CD14-positive monocyte (primary cell): ENCODE measurements at regions of chr15 and their contacts with region 1.

Region 1: GRCh38 chr15:84716036-84716799 is at the start of gene SEC11A:
- DNase-seq: peak; percentile 92 to 96 (median 93)
- H3K4me3 ChIP-seq: peak within 1 kb of the TSS; percentile 73 to 100 (median 99)
- H3K4me3 Mint-ChIP-seq: peak within 1 kb of the TSS; percentile 98 to 100
- H3K27ac ChIP-seq: peak within 1 kb of the TSS; percentile 93
- H3K27ac Mint-ChIP-seq: peak within 1 kb of the TSS; percentile 86 to 100 (median 99)
- H3K4me1 ChIP-seq: peaks cover 49 to 64% of the 10 kb centered on the region in 2 donors
- H3K4me1 Mint-ChIP-seq: peaks cover 54% of the 10 kb centered on the region
- H3K27me3 ChIP-seq: no peaks in the 10 kb centered on the region
- H3K27me3 Mint-ChIP-seq: peaks cover 0 to 2% (median 0%) of the 10 kb centered on the region in 3 donors
- CTCF ChIP-seq: no peak
- polyA plus RNA-seq, gene SEC11A: 111 to 166 (median 154) TPM

Region 2: DNA sequence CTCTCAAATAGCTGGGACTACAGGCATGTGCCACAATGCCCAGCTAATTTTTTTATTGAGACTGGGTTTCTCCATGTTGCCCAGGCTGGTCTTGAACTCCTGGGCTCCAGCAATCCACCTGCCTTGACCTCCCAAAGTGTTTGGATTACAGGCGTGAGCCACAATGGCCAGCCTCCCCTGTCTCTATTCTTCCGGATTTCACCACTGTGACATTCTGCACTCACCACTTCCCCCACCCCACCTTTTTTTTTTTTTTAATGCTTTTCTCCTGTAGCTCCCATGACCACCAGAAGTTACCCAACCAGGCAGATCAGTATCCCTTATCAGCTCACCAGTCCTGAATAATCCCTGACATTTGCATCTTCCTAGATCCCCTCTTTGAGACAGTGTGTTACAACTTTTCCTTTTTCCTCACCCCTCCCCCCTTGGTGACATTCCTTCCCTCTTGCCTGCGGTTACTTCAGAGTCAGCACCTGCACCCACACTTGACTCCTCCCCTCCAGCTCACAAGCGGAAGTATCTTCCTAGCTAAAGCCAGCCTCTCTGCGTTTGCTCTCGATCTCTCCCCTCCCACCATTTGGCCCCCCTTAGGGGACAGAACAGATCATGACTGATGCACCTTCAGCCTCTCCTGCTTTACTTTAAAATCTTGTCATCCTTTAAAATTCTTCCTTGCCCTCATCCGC is 18.7 kb after region 1 on chr15:
- intact Hi-C with region 1: loop called in 1 of 2 experiments (anchors 2 kb)
- DNase-seq: peak; percentile 78 to 82 (median 78)
- H3K4me3 ChIP-seq: peak overlapping the region; percentile 20 to 71 (median 32)
- H3K4me3 Mint-ChIP-seq: peak overlapping the region; percentile 79 to 93
- H3K27ac ChIP-seq: peak overlapping the region; percentile 85 to 99
- H3K27ac Mint-ChIP-seq: peak overlapping the region; percentile 97 to 99 (median 98)
- H3K4me1 ChIP-seq: peaks cover 58 to 72% of the 10 kb centered on the region in 2 donors
- H3K4me1 Mint-ChIP-seq: peaks cover 61% of the 10 kb centered on the region
- H3K27me3 ChIP-seq: no peaks in the 10 kb centered on the region
- H3K27me3 Mint-ChIP-seq: no peaks in the 10 kb centered on the region
- CTCF ChIP-seq: no peak

Region 3: GRCh38 chr15:84748274-84749110 is 32.3 kb after region 1 on chr15 and contains the start of gene ZNF592:
- intact Hi-C with region 1: loop called (anchors 1 to 2 kb)
- DNase-seq: peak; percentile 59 to 67 (median 63)
- H3K4me3 ChIP-seq: peak within 1 kb of the TSS; percentile 72 to 100 (median 96)
- H3K4me3 Mint-ChIP-seq: peak within 1 kb of the TSS; percentile 97 to 99
- H3K27ac ChIP-seq: peak within 1 kb of the TSS; percentile 95 to 97
- H3K27ac Mint-ChIP-seq: peak within 1 kb of the TSS; percentile 98 to 100 (median 99)
- H3K4me1 ChIP-seq: peaks cover 47 to 59% of the 10 kb centered on the region in 2 donors
- H3K4me1 Mint-ChIP-seq: peaks cover 66% of the 10 kb centered on the region
- H3K27me3 ChIP-seq: no peaks in the 10 kb centered on the region
- H3K27me3 Mint-ChIP-seq: no peaks in the 10 kb centered on the region
- CTCF ChIP-seq: peak; percentile 7
- polyA plus RNA-seq, gene ZNF592: 2.8 to 43.6 (median 5.0) TPM

Region 4: DNA sequence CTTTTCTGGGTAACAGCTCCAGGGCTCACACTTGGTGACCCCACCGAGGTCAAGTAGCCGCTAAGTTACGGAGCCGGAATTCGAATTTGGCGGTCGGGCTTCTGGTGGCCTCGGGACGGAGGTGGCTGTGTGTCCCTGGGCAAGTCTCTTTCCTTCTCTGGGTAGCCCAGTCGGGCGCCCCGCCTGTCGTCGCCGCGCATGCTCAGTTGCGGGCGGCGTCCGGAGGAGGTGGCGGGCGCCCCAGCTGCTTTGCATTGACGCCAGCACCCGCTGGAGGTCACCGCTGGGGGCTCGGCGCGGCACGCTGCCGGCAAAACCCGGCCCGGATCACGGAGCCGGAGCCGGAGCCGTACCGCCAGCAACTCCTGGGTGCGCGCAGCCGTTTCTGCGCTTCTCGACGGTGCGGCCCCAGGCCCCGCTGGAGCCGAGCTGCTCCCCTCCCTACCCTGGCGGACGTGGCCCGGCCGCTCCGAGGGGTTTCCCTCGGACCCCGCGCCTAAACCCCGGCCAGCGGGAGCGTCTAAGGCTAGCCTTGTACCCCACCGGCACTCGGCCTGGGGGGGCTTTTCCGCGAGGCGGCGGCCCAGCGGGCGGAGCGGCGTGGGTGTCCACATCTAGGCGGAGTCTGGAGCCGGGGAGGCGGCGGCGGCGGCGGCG is 265.0 kb after region 1 on chr15:
- intact Hi-C with region 1: loop called in 1 of 2 experiments (anchors 10 kb)
- DNase-seq: peak; percentile 93 to 96 (median 95)
- H3K4me3 ChIP-seq: peak overlapping the region; percentile 87 to 97 (median 96)
- H3K4me3 Mint-ChIP-seq: peak overlapping the region; percentile 95
- H3K27ac ChIP-seq: peak overlapping the region; percentile 92 to 94
- H3K27ac Mint-ChIP-seq: peak overlapping the region; percentile 93 to 98 (median 97)
- H3K4me1 ChIP-seq: peaks cover 22 to 26% of the 10 kb centered on the region in 2 donors
- H3K4me1 Mint-ChIP-seq: peaks cover 39% of the 10 kb centered on the region
- H3K27me3 ChIP-seq: peaks cover 0 to 9% of the 10 kb centered on the region in 2 donors
- H3K27me3 Mint-ChIP-seq: peaks cover 14 to 24% (median 15%) of the 10 kb centered on the region in 3 donors
- CTCF ChIP-seq: no peak